BJ (cell line): ENCODE measurements at regions of chr2 and their contacts with region 1.

Region 1: DNA sequence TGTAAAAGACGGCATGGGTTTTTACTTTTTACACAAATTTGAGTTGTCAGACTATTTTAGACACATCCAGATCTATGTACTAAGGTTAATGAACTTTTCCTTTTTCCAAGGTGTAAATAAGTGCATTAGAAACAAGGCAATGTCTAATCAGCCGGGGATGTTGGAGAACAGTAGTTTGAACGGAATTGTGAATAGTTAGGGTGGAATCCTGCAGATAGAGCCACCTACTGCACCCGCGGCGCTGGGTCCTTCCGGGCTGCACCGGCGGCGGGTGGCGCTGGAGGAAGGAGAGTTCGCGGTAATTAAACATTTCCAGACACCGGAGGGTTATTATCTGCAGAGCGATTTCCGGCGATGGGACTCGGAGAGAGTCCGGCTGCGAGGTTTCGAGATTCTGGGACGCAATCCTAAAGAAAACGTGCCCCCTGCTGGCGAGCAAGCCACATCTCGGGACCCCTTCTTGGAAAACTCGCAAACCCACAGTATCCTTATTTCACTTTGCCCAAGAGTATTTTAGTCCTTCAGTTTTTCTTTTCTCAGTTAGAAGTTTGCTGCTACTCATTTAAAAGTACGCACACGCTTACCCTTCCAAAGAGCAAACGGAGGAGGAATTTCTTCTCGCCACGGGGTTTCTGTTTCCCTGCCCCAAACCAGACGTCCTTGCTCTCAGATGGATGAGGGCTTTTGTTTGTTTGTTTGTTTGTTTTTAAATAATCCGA is 4.5 kb upstream of the OSR1 start:
- DNase-seq: peak; percentile 23
- H3K4me3 ChIP-seq: peak overlapping the region; percentile 64
- H3K27me3 ChIP-seq: peaks cover 2% of the 10 kb centered on the region; the same call in 1 of the 2 replicates
- CTCF ChIP-seq: peak; percentile 84

Region 2: DNA sequence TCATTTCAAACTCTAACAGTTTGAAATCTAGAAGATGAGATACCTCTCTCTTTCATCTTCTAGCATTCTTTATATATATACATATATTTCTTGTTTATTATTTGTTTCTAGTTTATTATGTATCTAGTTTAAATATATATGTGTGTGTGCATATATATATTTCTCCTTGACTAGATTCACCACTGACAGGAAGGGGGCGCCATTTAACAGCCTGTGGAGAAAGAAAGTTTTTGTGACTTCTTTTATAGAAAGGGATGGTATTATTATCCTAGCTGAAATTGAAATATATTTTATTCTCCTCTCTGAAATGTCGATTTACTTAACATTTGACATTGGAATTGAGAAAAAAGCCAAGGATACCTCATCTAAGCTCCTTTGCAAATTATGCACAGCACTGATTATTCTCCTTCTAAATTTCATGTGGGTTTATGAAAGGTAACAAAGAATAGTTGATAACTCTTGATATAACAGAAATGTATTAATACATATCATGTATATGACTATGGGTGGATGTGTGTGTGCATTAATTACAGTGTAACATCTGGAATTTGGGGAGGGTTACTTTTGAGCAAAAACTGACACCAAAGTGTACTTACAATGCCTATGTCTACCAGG is 612.9 kb before region 1 on chr2:
- CTCF ChIA-PET with region 1: interaction called, 30 read pairs
- POLR2A ChIA-PET with region 1: interaction called, 3 read pairs
- DNase-seq: no peak
- H3K4me3 ChIP-seq: no peak overlapping the region
- H3K27me3 ChIP-seq: no peaks in the 10 kb centered on the region
- CTCF ChIP-seq: peak; percentile 72

Region 3: GRCh38 chr2:19474128-19474527 is 111.2 kb after region 1 on chr2:
- CTCF ChIA-PET with region 1: no interaction called
- POLR2A ChIA-PET with region 1: no interaction called
- DNase-seq: peak; percentile 64
- H3K4me3 ChIP-seq: no peak overlapping the region
- H3K27me3 ChIP-seq: peaks cover 14% of the 10 kb centered on the region
- CTCF ChIP-seq: no peak